ENCODE measurements at regions of chr2 and their contacts with region 1.

Region 1: DNA sequence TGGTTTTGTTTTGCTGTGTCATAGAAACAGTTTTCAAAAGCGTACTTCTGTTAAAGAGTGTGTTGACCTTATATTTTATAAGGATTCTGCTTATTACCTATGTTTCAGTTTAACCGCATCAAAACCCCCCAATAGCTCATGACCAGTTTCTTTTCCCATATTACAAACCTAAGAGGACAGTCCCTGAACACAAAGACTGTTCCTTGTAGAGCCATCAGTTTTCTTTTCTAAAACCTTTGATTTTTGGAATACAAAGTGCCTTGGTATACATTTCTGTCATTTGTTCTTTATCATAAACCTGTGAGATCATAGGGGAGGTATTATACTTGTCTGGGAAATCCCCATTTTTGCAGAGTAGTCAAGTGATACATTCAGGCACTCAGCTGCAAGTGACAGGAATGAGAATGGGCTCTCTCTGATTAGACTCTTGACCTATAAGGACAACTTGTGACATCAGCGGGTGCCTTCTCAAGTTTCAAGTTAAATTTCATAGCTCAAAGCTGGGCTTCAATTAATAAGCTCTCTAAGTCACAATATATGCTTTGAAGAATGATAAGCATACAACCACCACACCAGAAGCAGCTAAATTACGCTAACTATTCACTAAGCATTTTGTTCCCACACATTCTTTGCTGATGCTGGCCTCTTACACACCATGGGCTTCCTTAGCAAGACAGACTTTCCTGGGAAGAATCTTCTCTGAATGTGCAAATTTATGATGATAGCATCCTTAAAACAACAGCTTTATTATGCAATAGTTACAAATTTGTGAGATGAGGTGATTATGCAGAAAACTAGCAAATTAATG is 97.5 kb upstream of the CD302 start:
- DNase-seq: no peak
- H3K4me3 ChIP-seq: no peak overlapping the region
- CTCF ChIP-seq: no peak
- POLR2A ChIP-seq: no peak

Region 2: DNA sequence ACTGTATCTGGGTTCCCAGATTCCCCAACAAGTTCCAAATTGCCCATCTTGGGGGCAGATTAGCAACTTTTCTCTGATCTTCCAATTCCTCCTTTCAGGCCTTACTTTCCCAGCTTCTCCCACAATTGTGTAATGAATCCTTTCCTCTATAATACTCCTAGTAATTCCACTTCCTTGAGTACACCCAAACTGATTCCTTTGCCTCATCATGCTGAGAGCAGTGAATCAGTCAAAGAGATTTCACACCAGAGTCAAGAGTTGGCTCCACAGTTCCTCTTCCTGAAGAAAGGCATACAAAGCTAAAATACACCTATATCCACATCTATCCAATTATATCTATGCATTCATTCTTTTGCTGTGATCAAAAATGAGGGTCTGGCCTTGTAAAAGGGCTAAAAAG is 1128.9 kb before region 1 on chr2:
- intact Hi-C with region 1: loop called (anchors 5 kb)
- DNase-seq: no peak
- H3K4me3 ChIP-seq: no peak overlapping the region
- CTCF ChIP-seq: no peak
- POLR2A ChIP-seq: no peak

Region 3: GRCh38 chr2:161028581-161028980 is 1133.1 kb after region 1 on chr2:
- intact Hi-C with region 1: no loop called
- DNase-seq: no peak
- H3K4me3 ChIP-seq: no peak overlapping the region
- CTCF ChIP-seq: no peak
- POLR2A ChIP-seq: no peak

Measured in lower leg skin (tissue), 4 donors.